Keratinocyte (primary cell): ENCODE measurements at regions of chr1 and their contacts with region 1.

Region 1: GRCh38 chr1:203549309-203549708 is 55.4 kb downstream of the OPTC start:
- DNase-seq: no peak
- H3K4me3 ChIP-seq: no peak overlapping the region
- H3K27ac ChIP-seq: no peak overlapping the region
- H3K4me1 ChIP-seq: peaks cover 12% of the 10 kb centered on the region
- H3K27me3 ChIP-seq: no peaks in the 10 kb centered on the region
- CTCF ChIP-seq: no peak

Region 2: GRCh38 chr1:203340112-203340804 is 209.1 kb before region 1 on chr1:
- dilution Hi-C with region 1: no loop called
- DNase-seq: peak; percentile 54
- H3K4me3 ChIP-seq: no peak overlapping the region
- H3K27ac ChIP-seq: no peak overlapping the region
- H3K4me1 ChIP-seq: peaks cover 21% of the 10 kb centered on the region
- H3K27me3 ChIP-seq: peaks cover 4% of the 10 kb centered on the region
- CTCF ChIP-seq: peak; percentile 83 to 92 (median 91)

Region 3: GRCh38 chr1:203600782-203601736 is 51.8 kb after region 1 on chr1:
- dilution Hi-C with region 1: loop called (anchors 5 kb)
- DNase-seq: no peak
- H3K4me3 ChIP-seq: no peak overlapping the region
- H3K27ac ChIP-seq: no peak overlapping the region
- H3K4me1 ChIP-seq: peaks cover 10% of the 10 kb centered on the region
- H3K27me3 ChIP-seq: no peaks in the 10 kb centered on the region
- CTCF ChIP-seq: no peak